ENCODE measurements at regions of chr20 and their contacts with region 1.

Region 1: GRCh38 chr20:2172305-2173175 is 70.9 kb downstream of the STK35 start:
- DNase-seq: peak; percentile 80
- ATAC-seq: peak; percentile 88
- H3K4me3 Mint-ChIP-seq: peak overlapping the region; percentile 57
- H3K27ac Mint-ChIP-seq: no peak overlapping the region
- H3K4me1 Mint-ChIP-seq: peaks cover 3% of the 10 kb centered on the region; the same call in 1 of the 2 replicates
- H3K27me3 Mint-ChIP-seq: peaks cover 3% of the 10 kb centered on the region; the same call in 1 of the 2 replicates
- CTCF ChIP-seq: peak; percentile 91

Region 2: DNA sequence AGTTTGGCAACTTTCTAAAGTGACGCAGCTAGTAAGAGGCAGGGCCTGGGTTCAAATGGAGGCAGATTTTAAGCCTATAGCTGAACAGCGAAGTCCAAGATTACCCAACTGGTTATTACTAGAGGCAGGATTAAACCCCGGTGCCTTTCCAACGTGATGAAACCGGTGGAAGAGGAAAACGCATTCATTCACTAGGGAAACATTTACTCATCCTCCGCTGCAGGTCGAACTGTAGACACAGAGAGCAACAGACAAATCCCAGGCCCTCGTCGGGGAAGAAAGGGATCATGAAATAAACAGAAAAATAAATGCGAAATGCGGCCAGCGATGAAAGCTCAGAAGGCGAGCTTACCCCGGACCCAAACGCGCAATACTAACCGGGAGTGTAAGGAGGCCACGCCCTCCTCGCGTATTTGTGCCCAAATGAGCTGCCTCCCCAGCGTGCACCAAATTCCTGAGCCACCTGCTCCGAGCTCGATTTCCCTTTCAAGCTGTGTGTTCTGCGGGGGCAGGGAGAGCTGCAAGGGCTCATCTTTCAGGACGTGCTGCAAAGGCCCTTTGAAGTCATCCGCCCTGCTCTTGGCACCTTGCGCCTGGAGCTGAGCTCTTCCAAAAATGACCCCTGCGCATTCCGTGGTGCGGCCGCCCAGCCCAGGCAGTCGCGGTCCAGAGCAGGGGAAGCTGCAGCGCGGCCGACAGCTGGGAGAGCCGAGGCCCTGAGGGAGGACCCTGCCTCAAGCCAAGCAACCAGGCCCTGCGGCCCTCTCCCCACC is 225.6 kb before region 1 on chr20:
- CTCF ChIA-PET with region 1: interaction called, 11 read pairs
- POLR2A ChIA-PET with region 1: no interaction called
- DNase-seq: peak; percentile 90
- ATAC-seq: peak; percentile 81
- H3K4me3 Mint-ChIP-seq: peak overlapping the region; percentile 72
- H3K27ac Mint-ChIP-seq: peak overlapping the region; percentile 75
- H3K4me1 Mint-ChIP-seq: peaks cover 64% of the 10 kb centered on the region
- H3K27me3 Mint-ChIP-seq: peaks cover 42% of the 10 kb centered on the region
- CTCF ChIP-seq: no peak

Region 3: DNA sequence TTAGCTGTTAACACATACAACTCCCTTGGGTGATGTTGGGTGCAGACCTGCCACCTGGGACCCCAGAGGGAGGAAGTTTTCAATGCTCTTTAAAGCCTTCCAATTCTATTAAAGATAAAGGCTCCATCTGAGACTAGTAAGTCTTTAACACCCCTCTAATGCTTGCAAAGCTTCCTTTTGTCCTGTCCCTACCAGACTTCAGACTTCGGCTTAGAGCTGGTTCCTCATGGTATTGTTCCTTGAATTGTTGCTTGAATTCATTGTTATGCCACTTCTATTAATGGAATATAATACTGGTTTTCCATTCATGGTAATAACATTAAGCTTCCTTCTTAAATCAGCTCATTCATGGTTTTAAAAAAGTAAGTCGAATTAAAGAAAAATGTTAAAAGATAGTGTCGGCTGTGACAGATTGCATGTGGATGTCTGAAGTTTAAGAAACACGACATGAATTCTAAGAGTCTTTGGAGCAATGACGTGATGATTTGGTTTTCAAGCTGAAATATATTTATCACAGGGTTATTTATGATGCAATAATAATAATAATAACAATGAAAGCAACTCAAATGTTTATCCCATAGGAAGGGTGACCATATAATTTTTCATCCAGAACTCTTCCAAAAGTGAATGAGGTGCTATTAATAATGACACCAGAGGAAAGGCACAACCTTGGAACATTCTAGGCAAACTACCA is 200.5 kb before region 1 on chr20:
- CTCF ChIA-PET with region 1: interaction called, 54 read pairs
- POLR2A ChIA-PET with region 1: interaction called, 3 read pairs
- DNase-seq: no peak
- ATAC-seq: no peak
- H3K4me3 Mint-ChIP-seq: no peak overlapping the region
- H3K27ac Mint-ChIP-seq: no peak overlapping the region
- H3K4me1 Mint-ChIP-seq: peaks cover 13% of the 10 kb centered on the region; the same call in 1 of the 2 replicates
- H3K27me3 Mint-ChIP-seq: peaks cover 3% of the 10 kb centered on the region; the same call in 1 of the 2 replicates
- CTCF ChIP-seq: no peak

Region 4: GRCh38 chr20:2101865-2102584 is 70.5 kb before region 1 on chr20:
- CTCF ChIA-PET with region 1: interaction called, 21 read pairs
- POLR2A ChIA-PET with region 1: no interaction called
- DNase-seq: peak; percentile 87
- ATAC-seq: peak; percentile 83
- H3K4me3 Mint-ChIP-seq: peak overlapping the region; percentile 83
- H3K27ac Mint-ChIP-seq: peak overlapping the region; percentile 100
- H3K4me1 Mint-ChIP-seq: peaks cover 43% of the 10 kb centered on the region
- H3K27me3 Mint-ChIP-seq: no peaks in the 10 kb centered on the region
- CTCF ChIP-seq: no peak

Region 5: GRCh38 chr20:2162125-2162822 is 10.3 kb before region 1 on chr20:
- CTCF ChIA-PET with region 1: interaction called, 35 read pairs
- POLR2A ChIA-PET with region 1: no interaction called
- DNase-seq: no peak
- ATAC-seq: no peak
- H3K4me3 Mint-ChIP-seq: no peak overlapping the region
- H3K27ac Mint-ChIP-seq: no peak overlapping the region
- H3K4me1 Mint-ChIP-seq: peaks cover 8% of the 10 kb centered on the region; the same call in 1 of the 2 replicates
- H3K27me3 Mint-ChIP-seq: no peaks in the 10 kb centered on the region
- CTCF ChIP-seq: no peak

Measured in WTC11 (cell line).